MCF 10A (cell line): ENCODE measurements at regions of chr15 and their contacts with region 1.

Region 1: DNA sequence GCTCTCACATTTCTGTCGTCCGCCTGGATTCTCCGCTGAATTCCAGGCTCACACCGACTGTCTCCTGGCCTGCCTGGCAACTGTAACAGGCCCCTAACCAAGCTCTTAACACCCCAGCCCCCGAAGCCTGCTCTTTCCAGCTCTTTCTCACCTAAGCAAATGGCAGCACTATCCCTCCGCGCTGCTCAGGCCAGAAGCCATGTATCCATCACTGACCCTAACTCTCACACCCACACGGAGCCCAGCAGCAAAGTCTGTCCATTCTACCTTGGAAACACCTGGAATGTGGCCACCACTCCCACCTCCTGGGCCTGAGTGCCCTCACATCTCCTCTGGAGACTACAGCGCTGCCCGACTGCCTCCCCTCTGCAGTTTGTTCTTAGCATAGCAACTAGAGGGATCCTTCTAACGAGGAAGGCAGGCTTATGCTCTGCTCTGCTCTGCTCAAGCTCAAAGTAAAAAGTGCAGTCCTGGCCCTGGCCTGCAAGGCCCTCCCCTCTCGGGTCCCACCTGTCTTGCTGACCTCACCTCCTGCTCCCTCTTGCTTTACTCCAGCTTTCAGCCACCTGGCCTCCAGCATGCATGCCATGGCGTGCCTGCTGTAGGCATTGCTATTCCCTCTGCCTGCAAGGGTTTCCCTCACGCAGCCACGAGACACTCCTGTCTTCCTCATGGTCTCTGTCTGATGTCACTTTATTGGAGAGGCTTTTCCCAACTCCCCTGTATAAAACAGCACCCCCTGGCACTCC is 27.2 kb downstream of the FEM1B start:
- DNase-seq: no peak
- H3K4me3 Mint-ChIP-seq: no peak overlapping the region
- H3K27ac Mint-ChIP-seq: peak overlapping the region; percentile 36
- H3K4me1 Mint-ChIP-seq: peaks cover 19% of the 10 kb centered on the region
- H3K27me3 Mint-ChIP-seq: no peaks in the 10 kb centered on the region
- CTCF ChIP-seq: no peak

Region 2: DNA sequence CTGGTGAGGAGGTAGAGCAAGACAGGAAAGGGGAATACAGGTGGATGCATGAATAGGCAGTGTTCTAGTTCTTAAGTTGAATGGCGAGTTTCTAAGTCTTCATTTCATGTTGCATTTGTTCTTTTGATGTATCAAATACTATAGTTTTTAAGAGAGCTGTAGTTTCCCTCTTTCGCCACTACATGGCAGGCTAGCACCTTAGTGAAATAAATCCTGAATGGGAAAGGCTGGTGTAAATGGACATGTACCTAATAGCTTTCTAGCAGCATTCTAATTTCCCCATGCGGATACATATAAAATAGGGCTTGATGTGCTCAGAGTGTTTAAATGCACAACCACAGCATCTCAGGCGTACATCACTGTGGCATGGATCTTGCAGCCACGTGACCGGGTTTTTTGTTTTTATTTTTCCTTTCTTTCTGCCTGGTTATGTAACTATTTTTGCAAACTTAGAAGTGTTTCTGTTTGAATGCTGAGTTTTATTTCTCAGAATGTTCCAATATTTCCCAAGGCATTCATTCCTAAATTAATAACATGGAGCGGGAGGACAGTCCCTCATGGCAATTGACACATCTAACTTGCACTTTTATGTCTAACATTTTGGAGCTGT is 51.7 kb before region 1 on chr15:
- CTCF ChIA-PET with region 1: interaction called, 97 read pairs
- POLR2A ChIA-PET with region 1: interaction called, 39 read pairs
- intact Hi-C with region 1: loop called (anchors 1 kb)
- DNase-seq: peak; percentile 89
- H3K4me3 Mint-ChIP-seq: no peak overlapping the region
- H3K27ac Mint-ChIP-seq: no peak overlapping the region
- H3K4me1 Mint-ChIP-seq: no peaks in the 10 kb centered on the region
- H3K27me3 Mint-ChIP-seq: no peaks in the 10 kb centered on the region
- CTCF ChIP-seq: peak; percentile 68

Region 3: DNA sequence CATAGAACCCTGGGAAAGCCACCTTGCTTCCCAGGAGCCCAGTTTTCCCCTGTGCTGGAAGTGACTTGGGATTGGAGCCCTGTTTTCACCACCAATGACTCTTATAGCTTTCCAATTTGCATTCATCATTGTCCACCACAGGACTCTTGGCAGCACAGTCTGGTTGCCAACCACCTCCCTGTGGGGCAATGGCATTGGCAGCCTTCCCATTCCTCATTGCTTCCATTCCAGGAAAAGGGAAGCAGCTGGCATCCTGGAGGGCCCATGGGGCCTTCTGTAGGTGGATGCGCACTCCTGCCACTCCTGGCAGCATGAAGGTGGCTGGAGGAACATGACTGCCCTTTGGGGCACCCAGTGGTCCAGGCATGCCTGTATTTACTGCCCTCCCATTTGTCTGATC is 30.5 kb after region 1 on chr15:
- CTCF ChIA-PET with region 1: interaction called, 11 read pairs
- POLR2A ChIA-PET with region 1: no interaction called
- intact Hi-C with region 1: no loop called
- DNase-seq: peak; percentile 97
- H3K4me3 Mint-ChIP-seq: no peak overlapping the region
- H3K27ac Mint-ChIP-seq: no peak overlapping the region
- H3K4me1 Mint-ChIP-seq: peaks cover 23% of the 10 kb centered on the region
- H3K27me3 Mint-ChIP-seq: no peaks in the 10 kb centered on the region
- CTCF ChIP-seq: no peak

Region 4: DNA sequence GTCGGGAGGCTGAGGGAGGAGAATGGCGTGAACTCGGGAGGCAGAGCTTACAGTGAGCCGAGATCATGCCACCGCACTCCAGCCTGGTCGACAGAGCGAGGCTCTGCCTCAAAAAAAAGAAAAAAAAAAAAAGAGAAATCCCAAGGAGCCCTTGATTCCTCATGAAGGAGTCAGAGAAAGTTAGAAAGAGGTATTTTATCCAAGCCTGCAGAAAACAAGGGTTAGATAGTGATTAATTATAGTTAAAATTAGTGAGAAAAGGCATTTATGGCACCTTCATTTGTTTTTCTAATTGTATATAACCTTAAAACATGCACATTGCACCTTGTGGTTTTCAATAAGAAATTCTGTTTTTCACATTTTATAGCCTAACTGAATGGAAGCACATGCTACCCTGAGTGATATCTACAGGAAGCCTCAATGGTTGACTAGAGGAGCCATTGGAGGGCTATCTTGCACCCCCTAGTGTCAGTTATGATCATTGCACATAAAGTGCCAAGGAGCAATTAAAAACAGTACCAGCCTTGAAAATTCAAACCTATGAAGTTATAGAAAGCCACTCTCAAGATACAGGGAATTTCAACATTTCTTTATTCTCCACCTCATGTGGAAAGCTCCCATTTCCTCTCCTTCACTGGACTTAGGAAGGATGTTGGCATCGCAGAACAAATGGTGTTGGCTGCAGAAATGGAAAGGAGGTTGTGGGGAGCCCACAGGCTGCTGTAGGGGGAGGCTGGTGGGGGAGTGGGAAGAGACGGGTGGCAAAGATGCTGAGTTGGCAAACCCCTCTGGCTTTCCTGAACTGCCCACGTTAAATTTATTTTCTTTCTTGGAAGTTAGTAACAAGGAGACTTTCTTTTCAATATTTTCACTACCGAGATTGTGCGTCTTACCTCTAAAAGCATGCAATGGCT is 78.7 kb after region 1 on chr15:
- CTCF ChIA-PET with region 1: interaction called, 12 read pairs
- POLR2A ChIA-PET with region 1: no interaction called
- intact Hi-C with region 1: loop called (anchors 1 kb)
- DNase-seq: peak; percentile 70
- H3K4me3 Mint-ChIP-seq: no peak overlapping the region
- H3K27ac Mint-ChIP-seq: no peak overlapping the region
- H3K4me1 Mint-ChIP-seq: peaks cover 11% of the 10 kb centered on the region
- H3K27me3 Mint-ChIP-seq: no peaks in the 10 kb centered on the region
- CTCF ChIP-seq: peak; percentile 54

Region 5: DNA sequence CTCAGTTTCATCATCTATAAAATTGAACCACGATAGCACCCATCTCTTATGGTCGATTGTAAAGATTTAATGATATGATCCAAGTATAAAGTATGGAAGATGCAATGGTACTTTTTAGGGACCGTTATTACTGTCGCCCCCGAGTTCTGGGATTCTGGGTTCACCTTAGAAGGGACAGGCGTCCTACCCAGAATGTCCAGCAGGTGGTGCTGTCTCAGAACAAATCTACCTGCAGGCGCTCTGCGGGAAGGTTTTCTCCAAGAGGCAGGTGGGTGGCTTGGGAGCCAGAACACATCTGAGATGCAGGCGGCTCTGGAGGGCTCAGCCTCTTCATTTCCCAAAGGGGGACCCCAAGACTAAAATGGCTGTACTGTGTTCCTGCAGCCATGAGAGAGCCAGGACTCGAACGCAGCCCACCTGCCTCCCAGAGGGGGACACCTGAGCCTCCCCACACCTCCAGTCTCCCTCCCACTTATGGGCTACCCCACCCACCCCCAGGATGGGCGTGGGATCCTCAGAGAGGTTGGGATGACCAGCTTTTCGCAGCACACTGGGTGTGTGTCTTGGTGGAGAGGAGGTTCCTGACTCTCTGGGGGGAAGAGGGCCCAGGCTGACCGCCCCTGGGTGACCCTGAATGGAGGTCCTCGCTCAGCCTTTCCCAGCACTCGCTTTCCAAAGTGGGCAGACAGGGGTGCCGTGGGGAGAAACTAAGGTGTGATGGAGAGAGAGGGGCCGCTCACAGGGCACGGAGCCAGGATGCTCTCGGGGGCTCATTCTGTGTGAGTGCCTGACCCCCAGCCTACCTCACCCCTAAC is 245.9 kb after region 1 on chr15:
- CTCF ChIA-PET with region 1: interaction called, 29 read pairs
- POLR2A ChIA-PET with region 1: interaction called, 4 read pairs
- intact Hi-C with region 1: loop called (anchors 1 kb)
- DNase-seq: peak; percentile 72
- H3K4me3 Mint-ChIP-seq: no peak overlapping the region
- H3K27ac Mint-ChIP-seq: no peak overlapping the region
- H3K4me1 Mint-ChIP-seq: no peaks in the 10 kb centered on the region
- H3K27me3 Mint-ChIP-seq: peaks cover 20% of the 10 kb centered on the region
- CTCF ChIP-seq: peak; percentile 84